ENCODE measurements at regions of chr5 and their contacts with region 1.

Region 1: GRCh38 chr5:54601411-54602230 is 84.1 kb downstream of the SNX18 start:
- DNase-seq: no peak
- ATAC-seq: no peak
- H3K4me3 Mint-ChIP-seq: no peak overlapping the region
- H3K27ac Mint-ChIP-seq: no peak overlapping the region
- H3K4me1 Mint-ChIP-seq: peaks cover 9% of the 10 kb centered on the region
- H3K27me3 Mint-ChIP-seq: peaks cover 2% of the 10 kb centered on the region
- CTCF ChIP-seq: no peak

Region 2: DNA sequence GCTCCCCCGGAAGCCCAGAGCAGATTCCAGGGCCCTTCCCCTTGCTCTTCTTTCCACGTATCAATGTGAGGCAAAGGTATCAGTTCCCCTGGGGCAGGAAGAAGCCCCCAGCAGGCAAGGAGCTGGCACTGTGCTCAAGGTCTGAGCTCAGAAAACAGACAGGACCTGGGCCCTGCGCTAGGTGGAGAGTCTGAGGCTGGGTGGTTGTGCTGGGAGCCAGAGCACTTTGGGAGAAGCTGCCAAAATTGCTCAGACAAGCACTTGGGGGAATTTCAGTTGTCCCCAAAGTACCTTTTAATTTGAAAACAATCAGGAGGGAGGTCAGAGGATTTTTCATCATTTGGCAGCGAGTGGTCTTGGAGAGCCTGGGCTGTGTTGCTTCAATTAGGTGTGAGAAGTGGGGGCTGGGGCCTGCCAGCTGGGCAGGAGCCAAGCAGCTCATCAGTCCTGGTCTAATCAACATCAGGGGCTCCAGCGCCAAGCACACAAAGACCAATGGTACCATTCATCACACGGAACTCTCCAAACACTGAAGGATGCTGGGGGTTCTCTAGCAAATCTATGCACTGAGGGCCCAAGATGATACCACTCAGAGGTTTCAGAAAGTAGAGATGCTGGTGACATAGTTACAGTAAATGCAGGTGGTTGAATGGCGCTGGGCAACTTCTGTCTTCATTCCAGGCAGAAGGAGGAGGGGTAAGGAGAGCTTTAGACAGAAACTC is 92.5 kb after region 1 on chr5:
- CTCF ChIA-PET with region 1: no interaction called
- POLR2A ChIA-PET with region 1: no interaction called
- intact Hi-C with region 1: loop called (anchors 5 kb)
- DNase-seq: no peak
- ATAC-seq: no peak
- H3K4me3 Mint-ChIP-seq: no peak overlapping the region
- H3K27ac Mint-ChIP-seq: no peak overlapping the region
- H3K4me1 Mint-ChIP-seq: peaks cover 37% of the 10 kb centered on the region
- H3K27me3 Mint-ChIP-seq: no peaks in the 10 kb centered on the region
- CTCF ChIP-seq: no peak